ENCODE measurements at regions of chr7 and their contacts with region 1.

Region 1: GRCh38 chr7:127717502-127718339 is 65.7 kb downstream of the SND1 start:
- DNase-seq: no peak
- ATAC-seq: peak; percentile 78
- H3K4me3 ChIP-seq: no peak overlapping the region
- H3K27ac ChIP-seq: no peak overlapping the region
- H3K4me1 ChIP-seq: no peaks in the 10 kb centered on the region
- H3K27me3 ChIP-seq: no peaks in the 10 kb centered on the region
- CTCF ChIP-seq: no peak
- EP300 ChIP-seq: no peak
- POLR2A ChIP-seq: no peak
- RAD21 ChIP-seq: no peak

Region 2: GRCh38 chr7:127938588-127938987 is 220.9 kb after region 1 on chr7:
- CTCF ChIA-PET with region 1: no interaction called
- POLR2A ChIA-PET with region 1: no interaction called
- RAD21 ChIA-PET with region 1: no interaction called
- SMC1A ChIA-PET with region 1: interaction called, 3 read pairs
- in situ Hi-C with region 1: no loop called
- intact Hi-C with region 1: loop called (anchors 10 kb)
- DNase-seq: no peak
- ATAC-seq: no peak
- H3K4me3 ChIP-seq: no peak overlapping the region
- H3K27ac ChIP-seq: no peak overlapping the region
- H3K4me1 ChIP-seq: no peaks in the 10 kb centered on the region
- H3K27me3 ChIP-seq: no peaks in the 10 kb centered on the region
- CTCF ChIP-seq: peak in 1 of 3 experiments; percentile 3; a peak in 1 of 6 replicates
- EP300 ChIP-seq: no peak
- POLR2A ChIP-seq: no peak
- RAD21 ChIP-seq: 0 out of 2 replicates have a peak, but pooled peaks have one; percentile 17

Measured in GM12878 (cell line).